Kidney (tissue), 22 donors: ENCODE measurements at regions of chr14 and their contacts with region 1.

Region 1: DNA sequence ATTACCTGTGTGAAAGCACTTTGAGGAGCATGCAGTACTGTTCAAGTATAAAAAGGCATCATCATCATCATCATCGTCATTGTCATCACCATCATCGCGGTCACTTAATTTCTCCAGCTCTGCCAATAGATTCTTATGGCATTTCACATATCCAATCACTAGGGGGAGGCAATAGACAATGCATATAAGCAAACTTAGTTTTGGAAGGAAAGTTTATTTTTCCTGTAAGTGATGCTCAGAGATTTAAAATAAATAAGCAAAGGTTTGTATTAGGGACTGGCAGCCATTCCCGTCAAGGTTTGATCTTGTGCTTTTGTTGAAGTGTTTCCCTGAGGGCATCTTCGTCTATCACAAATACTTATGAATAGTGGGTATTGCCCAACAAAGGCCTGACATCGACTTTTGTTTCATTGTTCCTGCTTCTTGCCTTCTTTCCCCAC is 127.4 kb downstream of the KTN1 start:
- DNase-seq: peak in 2 of 5 donors; percentile 52 to 71
- H3K4me3 ChIP-seq: no peak overlapping the region
- H3K27ac ChIP-seq: no peak overlapping the region
- H3K4me1 ChIP-seq: no peaks in the 10 kb centered on the region
- H3K27me3 ChIP-seq: no peaks in the 10 kb centered on the region
- CTCF ChIP-seq: peak; percentile 60

Region 2: GRCh38 chr14:56474419-56475022 is 767.1 kb after region 1 on chr14:
- intact Hi-C with region 1: loop called (anchors 10 kb)
- DNase-seq: peak in 2 of 5 donors; percentile 65 to 75
- H3K4me3 ChIP-seq: no peak overlapping the region
- H3K27ac ChIP-seq: no peak overlapping the region
- H3K4me1 ChIP-seq: no peaks in the 10 kb centered on the region
- H3K27me3 ChIP-seq: no peaks in the 10 kb centered on the region
- CTCF ChIP-seq: peak; percentile 81